IMR-90 (cell line): ENCODE measurements at regions of chr9 and their contacts with region 1.

Region 1: DNA sequence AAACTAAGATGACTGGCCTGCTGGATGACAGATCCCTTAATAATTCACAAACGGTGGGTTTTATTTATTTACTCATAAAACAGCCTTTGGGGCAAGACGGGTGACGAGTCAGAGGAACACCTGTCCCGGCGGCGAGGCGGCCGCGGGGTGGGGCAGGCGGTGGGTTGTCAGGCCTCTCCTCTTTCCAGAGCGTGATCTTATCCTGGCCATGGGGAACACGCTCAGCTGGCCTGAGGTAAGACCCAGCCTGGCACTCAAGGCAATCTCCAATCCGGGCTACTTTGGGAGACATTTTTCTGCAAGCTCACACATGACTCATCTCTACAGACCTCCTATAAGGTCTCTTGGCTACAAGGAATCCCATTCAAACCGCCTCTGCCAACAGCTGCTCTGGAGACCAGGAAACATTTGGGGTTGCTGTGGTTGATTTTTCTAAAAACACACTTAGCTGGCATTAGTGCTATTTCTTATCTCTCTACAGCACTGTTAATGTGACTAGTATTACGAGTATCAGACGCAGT is 6.3 kb downstream of the RAPGEF1 start:
- DNase-seq: peak; percentile 96
- ATAC-seq: peak; percentile 85
- H3K4me3 ChIP-seq: no peak overlapping the region
- H3K27ac ChIP-seq: peak overlapping the region; percentile 18; the same call in 1 of the 2 replicates
- H3K4me1 ChIP-seq: peaks cover 40% of the 10 kb centered on the region
- H3K27me3 ChIP-seq: no peaks in the 10 kb centered on the region
- CTCF ChIP-seq: no peak
- POLR2A ChIP-seq: no peak; the same call in 1 of the 2 replicates
- RAD21 ChIP-seq: peak; percentile 13; the same call in 1 of the 2 replicates

Region 2: DNA sequence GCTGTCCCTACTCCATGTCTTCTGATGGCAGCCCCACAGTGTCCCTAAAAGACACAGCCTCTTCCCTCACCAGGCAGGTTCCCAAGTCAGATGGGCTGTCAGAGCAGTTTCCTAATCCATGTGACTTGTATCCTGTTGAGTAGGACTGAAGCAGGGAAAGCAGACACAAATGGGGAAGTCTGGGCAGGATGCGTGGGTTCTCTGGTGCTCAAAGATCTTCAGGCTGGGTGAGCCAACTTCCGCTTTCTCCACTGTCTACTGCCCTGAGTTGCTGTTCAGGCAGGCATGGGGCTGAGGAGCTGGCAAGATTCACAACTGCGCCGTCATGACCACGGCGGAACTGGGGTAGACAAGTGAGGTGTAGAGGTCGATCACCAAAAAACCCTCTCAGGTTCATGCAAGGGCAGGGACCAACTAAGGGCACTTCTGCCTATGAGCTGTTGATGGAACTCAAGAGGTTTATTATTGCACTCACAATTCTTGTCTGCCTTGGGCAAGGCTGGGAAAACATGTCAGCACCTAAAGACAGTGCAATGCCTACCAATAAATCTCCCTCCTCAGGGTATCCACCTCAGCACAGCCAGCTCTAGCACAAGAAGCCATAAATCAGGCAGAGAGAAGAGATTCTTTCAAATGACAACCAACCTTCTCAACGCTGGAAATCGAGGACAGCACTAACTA is 77.1 kb before region 1 on chr9:
- CTCF ChIA-PET with region 1: interaction called, 3 read pairs
- POLR2A ChIA-PET with region 1: no interaction called
- dilution Hi-C with region 1: no loop called
- in situ Hi-C with region 1: no loop called
- intact Hi-C with region 1: loop called (anchors 5 kb)
- DNase-seq: no peak
- ATAC-seq: no peak
- H3K4me3 ChIP-seq: no peak overlapping the region
- H3K27ac ChIP-seq: peak overlapping the region; percentile 97; the same call in 1 of the 2 replicates
- H3K4me1 ChIP-seq: peaks cover 32% of the 10 kb centered on the region
- H3K27me3 ChIP-seq: no peaks in the 10 kb centered on the region
- CTCF ChIP-seq: no peak
- POLR2A ChIP-seq: no peak
- RAD21 ChIP-seq: no peak

Region 3: DNA sequence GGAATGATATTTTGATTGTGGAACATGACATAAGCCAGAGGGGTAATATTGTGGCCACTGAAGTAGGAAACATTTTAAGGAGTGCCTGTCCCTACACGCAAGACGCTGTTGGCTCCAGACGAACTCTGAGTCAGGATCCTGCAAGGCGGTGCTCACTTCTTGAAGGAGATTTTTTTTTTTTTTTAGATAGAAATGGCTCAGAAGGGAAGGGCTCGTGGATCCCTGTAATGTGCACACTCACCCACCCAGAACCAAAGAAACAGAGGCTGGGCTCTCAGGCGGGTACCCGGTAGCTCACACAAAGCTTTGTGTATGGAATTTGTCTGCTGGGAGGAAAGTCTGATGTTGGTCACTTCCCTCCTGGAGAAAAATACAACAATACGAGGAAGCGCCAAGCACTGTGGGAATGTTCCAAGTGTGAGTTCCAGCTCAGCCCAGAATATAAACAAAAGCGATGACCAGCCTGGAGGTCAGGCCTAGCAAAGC is 19.4 kb before region 1 on chr9:
- CTCF ChIA-PET with region 1: interaction called, 5 read pairs
- POLR2A ChIA-PET with region 1: no interaction called
- dilution Hi-C with region 1: no loop called
- in situ Hi-C with region 1: no loop called
- intact Hi-C with region 1: loop called (anchors 2 kb)
- DNase-seq: peak; percentile 91
- ATAC-seq: peak; percentile 85
- H3K4me3 ChIP-seq: peak overlapping the region; percentile 4; the same call in 1 of the 2 replicates
- H3K27ac ChIP-seq: peak overlapping the region; percentile 72
- H3K4me1 ChIP-seq: peaks cover 15% of the 10 kb centered on the region
- H3K27me3 ChIP-seq: no peaks in the 10 kb centered on the region
- CTCF ChIP-seq: no peak
- POLR2A ChIP-seq: 0 out of 2 replicates have a peak, but pooled peaks have one; percentile 37
- RAD21 ChIP-seq: no peak